PC-9 (cell line): ENCODE measurements at regions of chr3 and their contacts with region 1.

Region 1: GRCh38 chr3:107846279-107846852 is 244.5 kb downstream of the CD47 start:
- DNase-seq: peak in 1 of 2 experiments; percentile 59
- H3K4me3 ChIP-seq: no peak overlapping the region
- H3K27ac ChIP-seq: no peak overlapping the region
- H3K4me1 ChIP-seq: peaks cover 7% of the 10 kb centered on the region; the same call in 1 of the 2 replicates
- H3K27me3 ChIP-seq: no peaks in the 10 kb centered on the region
- CTCF ChIP-seq: peak; percentile 76

Region 2: GRCh38 chr3:107222907-107223306 is 623.5 kb before region 1 on chr3:
- CTCF ChIA-PET with region 1: interaction called, 10 read pairs
- POLR2A ChIA-PET with region 1: no interaction called
- intact Hi-C with region 1: no loop called
- DNase-seq: peak in 1 of 2 experiments; percentile 85
- H3K4me3 ChIP-seq: no peak overlapping the region
- H3K27ac ChIP-seq: peak overlapping the region; percentile 31
- H3K4me1 ChIP-seq: peaks cover 38% of the 10 kb centered on the region
- H3K27me3 ChIP-seq: no peaks in the 10 kb centered on the region
- CTCF ChIP-seq: no peak

Region 3: DNA sequence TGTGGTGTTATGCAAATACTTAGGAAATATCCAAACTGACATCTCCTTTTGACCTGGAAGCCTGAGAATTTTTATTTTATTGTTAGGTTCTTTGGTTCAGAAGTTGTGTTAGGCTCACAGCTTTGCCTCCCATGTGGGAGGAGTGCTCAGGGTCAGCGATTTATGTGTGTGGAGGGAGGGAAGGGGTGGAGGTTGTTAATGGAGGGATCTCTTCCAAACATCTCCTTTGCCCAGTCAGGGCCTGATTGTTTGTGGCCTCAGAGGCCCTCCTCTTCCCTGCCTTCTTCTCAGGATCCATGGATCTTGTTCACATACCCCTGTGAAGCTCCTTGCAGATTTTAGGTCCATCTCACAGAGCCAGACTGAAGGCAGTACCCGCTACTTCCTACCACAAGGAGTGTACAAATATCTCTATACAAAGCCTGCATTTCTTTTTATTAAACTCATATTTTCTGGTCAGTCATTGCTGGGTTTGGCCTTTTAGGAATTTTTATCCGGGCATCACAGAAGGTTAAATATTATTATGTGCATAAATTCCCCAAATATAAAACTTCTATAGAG is 283.3 kb before region 1 on chr3:
- CTCF ChIA-PET with region 1: no interaction called
- POLR2A ChIA-PET with region 1: no interaction called
- intact Hi-C with region 1: no loop called
- DNase-seq: no peak
- H3K4me3 ChIP-seq: no peak overlapping the region
- H3K27ac ChIP-seq: no peak overlapping the region
- H3K4me1 ChIP-seq: no peaks in the 10 kb centered on the region; the same call in 1 of the 2 replicates
- H3K27me3 ChIP-seq: no peaks in the 10 kb centered on the region
- CTCF ChIP-seq: no peak

Region 4: DNA sequence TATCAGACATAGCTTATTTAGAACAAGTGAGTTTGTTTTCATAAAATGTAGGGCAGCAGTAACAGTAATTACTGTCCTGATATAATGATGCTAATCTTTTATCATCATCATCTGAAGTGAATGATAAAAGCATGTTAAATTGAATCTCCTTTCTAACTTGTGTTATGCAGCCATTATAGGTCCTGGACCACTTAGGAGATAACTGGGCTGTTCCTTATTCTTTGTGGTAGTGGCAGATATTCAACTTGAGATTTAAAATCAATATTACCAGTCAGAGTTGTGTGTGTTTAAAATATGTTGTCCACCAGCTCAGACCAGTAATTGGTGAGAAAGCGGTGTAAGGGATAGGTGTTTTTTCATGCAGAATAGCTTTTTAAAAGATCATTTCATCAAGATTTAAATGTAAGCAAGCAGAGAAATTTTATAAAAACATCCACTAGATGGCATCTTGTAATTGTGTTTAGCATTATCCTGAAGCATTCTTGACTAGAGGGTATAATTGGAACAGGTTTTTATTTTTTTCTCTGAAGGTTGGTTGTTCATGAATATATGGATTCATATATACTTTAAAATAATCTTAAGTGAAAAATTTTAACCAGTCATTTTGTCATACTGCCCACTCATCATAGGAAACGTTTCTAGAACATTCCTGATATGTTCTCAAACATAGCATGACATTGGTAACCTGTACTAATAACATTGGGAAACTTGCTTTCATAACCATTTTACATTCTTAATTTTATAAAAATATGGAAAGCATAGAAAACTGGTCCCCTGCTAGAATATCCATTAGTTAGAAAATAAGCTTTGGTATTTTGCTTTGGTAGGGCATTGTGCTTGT is 169.7 kb before region 1 on chr3:
- CTCF ChIA-PET with region 1: no interaction called
- POLR2A ChIA-PET with region 1: no interaction called
- intact Hi-C with region 1: loop called (anchors 5 kb)
- DNase-seq: peak in 1 of 2 experiments; percentile 57
- H3K4me3 ChIP-seq: no peak overlapping the region
- H3K27ac ChIP-seq: no peak overlapping the region
- H3K4me1 ChIP-seq: no peaks in the 10 kb centered on the region
- H3K27me3 ChIP-seq: no peaks in the 10 kb centered on the region
- CTCF ChIP-seq: peak; percentile 86